HEK293 (cell line): ENCODE measurements at regions of chr12 and their contacts with region 1.

Region 1: GRCh38 chr12:49296034-49296835 is 1.3 kb downstream of the PRPH start:
- H3K4me3 ChIP-seq: peak overlapping the region; percentile 57
- H3K27ac ChIP-seq: peak overlapping the region; percentile 55; the same call in 1 of the 2 replicates
- H3K4me1 ChIP-seq: peaks cover 8% of the 10 kb centered on the region
- CTCF ChIP-seq: peak; percentile 98

Region 2: GRCh38 chr12:49264738-49265515 is 31.3 kb before region 1 on chr12 and contains the start of gene TUBA1C:
- CTCF ChIA-PET with region 1: interaction called, 12 read pairs
- POLR2A ChIA-PET with region 1: interaction called, 19 read pairs
- H3K4me3 ChIP-seq: peak within 1 kb of the TSS; percentile 94
- H3K27ac ChIP-seq: peak within 1 kb of the TSS; percentile 84
- H3K4me1 ChIP-seq: peaks cover 5% of the 10 kb centered on the region
- CTCF ChIP-seq: 0 out of 2 replicates have a peak, but pooled peaks have one; percentile 17

Region 3: DNA sequence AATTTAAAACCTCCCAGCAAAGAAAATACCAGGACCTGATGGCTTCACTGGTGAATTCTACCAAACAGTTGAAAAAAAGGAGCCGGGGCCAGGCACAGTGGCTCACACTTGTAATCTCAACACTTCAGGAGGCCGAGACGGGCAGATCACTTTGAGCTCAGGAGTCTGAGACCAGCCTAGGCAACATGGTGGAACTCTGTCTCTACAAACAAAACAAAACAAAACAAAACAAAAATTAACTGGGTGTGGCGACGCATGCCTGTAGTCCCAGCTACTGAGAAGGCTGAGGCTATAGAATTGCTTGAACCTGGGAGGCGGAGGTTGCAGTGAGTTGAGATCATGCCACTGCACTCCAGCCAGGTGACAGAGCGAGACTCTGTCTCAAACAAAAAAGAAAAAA is 13.2 kb after region 1 on chr12:
- CTCF ChIA-PET with region 1: interaction called, 34 read pairs
- POLR2A ChIA-PET with region 1: interaction called, 6 read pairs
- H3K4me3 ChIP-seq: no peak overlapping the region
- H3K27ac ChIP-seq: no peak overlapping the region
- H3K4me1 ChIP-seq: no peaks in the 10 kb centered on the region
- CTCF ChIP-seq: no peak

Region 4: DNA sequence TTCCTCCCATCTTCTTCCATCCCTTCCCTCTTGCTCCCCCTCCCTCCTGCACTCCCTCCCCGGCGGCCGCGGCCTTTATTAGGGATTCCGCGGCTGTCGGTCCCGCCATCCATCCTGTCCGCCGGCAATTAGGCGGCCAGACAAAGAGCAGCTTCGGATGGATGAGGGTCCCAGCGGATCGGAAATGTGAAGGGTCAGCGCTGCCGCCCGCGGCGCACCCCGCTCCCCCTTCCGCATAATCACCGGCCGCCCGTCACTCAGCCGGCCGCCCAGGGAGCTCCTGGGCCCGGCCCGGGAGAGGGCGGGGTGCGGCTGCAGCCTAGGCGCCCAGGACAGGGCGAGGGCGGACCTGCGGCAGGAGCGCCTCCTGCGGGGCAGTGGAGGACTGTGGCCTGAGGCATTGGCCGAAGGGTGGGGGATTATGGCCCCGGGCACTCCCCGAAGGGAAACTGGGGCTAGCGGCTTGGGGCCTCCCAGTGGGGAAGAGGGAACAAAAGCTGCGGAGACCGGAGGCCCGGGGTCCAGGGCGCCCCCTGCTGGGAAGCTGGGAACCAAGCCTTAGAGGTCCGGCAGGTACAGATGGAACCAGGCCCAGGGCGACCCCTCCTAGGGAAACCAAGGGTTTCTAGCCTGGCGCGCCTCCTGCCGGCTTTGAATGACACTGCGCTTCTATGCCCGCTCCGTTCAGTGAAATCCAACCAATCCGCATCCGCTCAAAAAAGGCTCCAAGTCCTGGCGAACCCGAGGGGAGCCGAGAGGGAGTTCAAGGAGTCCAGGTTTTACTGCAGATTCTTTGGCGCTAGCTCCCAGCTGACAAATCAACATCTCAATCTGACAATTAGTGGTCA is 46.1 kb after region 1 on chr12:
- CTCF ChIA-PET with region 1: interaction called, 185 read pairs
- POLR2A ChIA-PET with region 1: interaction called, 17 read pairs
- H3K4me3 ChIP-seq: peak overlapping the region; percentile 20
- H3K27ac ChIP-seq: peak overlapping the region; percentile 21; the same call in 1 of the 2 replicates
- H3K4me1 ChIP-seq: peaks cover 22% of the 10 kb centered on the region
- CTCF ChIP-seq: peak; percentile 88

Region 5: DNA sequence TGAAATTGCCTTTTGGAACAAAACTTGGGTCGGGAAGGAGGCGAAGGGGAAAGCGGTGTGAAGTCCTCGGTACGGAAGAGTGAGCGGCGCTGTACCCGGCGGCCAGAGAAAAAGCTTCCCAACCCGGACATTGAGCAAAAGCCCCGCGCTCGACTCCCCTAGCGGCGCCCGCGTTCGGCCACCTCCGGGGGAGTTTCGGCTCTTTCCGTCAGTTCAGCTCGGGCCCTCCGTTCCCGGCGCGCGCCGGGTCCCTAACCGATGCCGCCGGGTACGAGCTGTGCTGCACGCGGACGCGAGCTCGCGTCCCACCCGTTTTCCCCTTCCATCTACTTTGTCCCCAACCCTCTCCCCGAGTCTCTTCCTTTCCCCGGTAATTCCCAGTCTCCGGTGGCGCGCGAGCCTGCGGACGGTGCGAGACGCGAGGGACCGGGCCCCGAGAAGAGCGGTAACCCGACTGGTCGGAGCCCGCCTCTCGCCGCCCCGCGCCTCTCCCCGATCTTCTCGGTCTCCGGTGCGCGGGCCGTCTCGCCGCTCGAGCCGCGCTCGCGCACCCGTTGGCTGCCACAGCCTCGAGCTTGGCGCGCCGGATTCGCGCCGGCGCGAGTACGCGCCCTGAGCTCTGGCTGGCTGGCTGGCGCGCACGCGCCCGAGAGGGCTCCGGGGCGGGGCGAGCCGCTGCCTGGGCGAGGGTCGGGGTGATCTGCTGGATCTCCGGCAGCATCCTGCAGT is 70.6 kb after region 1 on chr12:
- CTCF ChIA-PET with region 1: interaction called, 7 read pairs
- POLR2A ChIA-PET with region 1: interaction called, 17 read pairs
- H3K4me3 ChIP-seq: peak overlapping the region; percentile 97
- H3K27ac ChIP-seq: peak overlapping the region; percentile 99
- H3K4me1 ChIP-seq: peaks cover 9% of the 10 kb centered on the region
- CTCF ChIP-seq: peak; percentile 90

Region 6: GRCh38 chr12:49580572-49581535 is 284.6 kb after region 1 on chr12:
- CTCF ChIA-PET with region 1: interaction called, 20 read pairs
- POLR2A ChIA-PET with region 1: no interaction called
- H3K4me3 ChIP-seq: no peak overlapping the region
- H3K27ac ChIP-seq: no peak overlapping the region
- H3K4me1 ChIP-seq: no peaks in the 10 kb centered on the region
- CTCF ChIP-seq: peak; percentile 90